CD8-positive, alpha-beta T cell (primary cell): ENCODE measurements at regions of chr17 and their contacts with region 1.

Region 1: DNA sequence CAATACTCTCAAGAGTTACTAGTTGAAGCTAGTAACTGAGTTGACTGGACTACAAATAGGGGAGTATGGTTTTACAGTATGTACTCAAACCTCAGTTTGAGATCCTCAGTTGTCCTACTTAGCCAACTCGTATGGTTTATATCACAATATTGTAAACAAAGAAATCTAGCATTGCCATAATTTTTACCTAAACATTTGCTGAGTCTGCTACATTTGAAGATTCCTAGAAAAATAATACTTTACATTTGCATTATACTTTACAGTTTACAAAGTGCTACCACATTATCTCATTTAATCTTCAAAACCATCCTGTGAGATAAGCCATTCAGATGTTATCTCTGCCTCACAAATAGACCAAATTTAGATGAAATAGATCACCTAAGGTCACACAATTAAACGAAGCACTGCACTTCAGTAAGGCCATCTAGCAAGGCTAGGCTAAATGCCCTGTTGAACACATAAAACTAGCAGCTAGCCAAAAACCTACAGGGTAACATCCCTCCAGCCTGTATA is 16.3 kb downstream of the CBX1 start:
- DNase-seq: no peak
- ATAC-seq: no peak
- H3K4me3 ChIP-seq: no peak overlapping the region
- H3K4me3 Mint-ChIP-seq: no peak overlapping the region
- H3K27ac ChIP-seq: no peak overlapping the region
- H3K27ac Mint-ChIP-seq: no peak overlapping the region
- H3K4me1 ChIP-seq: no peaks in the 10 kb centered on the region
- H3K4me1 Mint-ChIP-seq: peaks cover 10% of the 10 kb centered on the region
- H3K27me3 ChIP-seq: no peaks in the 10 kb centered on the region
- H3K27me3 Mint-ChIP-seq: no peaks in the 10 kb centered on the region
- CTCF ChIP-seq: no peak

Region 2: DNA sequence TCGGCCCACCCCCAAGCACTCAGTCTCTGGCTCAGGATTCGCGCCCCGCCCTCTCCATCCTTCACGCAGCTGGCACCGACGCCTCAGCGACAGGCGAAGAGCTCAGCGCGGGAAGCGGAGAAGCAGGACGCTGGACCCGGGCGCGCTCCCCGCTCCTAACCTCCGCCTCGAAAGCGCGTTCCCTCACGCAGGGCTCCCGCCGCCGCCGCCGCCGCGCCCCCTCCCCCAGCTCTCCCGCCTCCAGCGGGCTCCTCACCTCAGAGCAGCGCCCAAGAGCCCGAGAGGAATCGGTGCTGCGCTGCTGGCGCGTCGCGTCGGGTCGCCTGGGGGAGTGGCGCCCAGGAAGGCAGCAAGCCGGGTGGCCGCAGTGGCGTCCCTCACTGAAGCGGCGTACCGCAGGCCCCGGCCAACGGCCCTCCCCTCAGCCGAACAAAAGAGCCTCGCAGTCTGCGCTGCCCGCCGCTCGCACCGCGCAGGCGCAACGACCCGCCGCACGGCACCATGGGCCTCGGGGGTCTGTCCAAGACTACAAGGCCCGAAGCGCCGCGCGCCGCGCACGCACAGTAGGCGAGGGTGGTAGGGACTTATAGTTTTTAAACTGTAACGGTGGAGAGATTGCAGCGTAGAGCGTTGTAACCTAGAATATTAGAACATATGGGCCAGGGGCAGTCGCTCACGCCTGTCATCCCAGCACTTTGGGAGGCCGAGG is 16.2 kb after region 1 on chr17 and contains the start of gene CBX1:
- CTCF ChIA-PET with region 1: interaction called, 16 read pairs
- POLR2A ChIA-PET with region 1: interaction called, 4 read pairs
- intact Hi-C with region 1: no loop called
- DNase-seq: peak; percentile 84 to 96 (median 94)
- ATAC-seq: peak; percentile 96
- H3K4me3 ChIP-seq: peak within 1 kb of the TSS; percentile 65 to 91
- H3K4me3 Mint-ChIP-seq: peak within 1 kb of the TSS; percentile 89
- H3K27ac ChIP-seq: peak within 1 kb of the TSS; percentile 24 to 50
- H3K27ac Mint-ChIP-seq: peak within 1 kb of the TSS; percentile 79
- H3K4me1 ChIP-seq: peaks cover 21% of the 10 kb centered on the region
- H3K4me1 Mint-ChIP-seq: peaks cover 37% of the 10 kb centered on the region
- H3K27me3 ChIP-seq: no peaks in the 10 kb centered on the region
- H3K27me3 Mint-ChIP-seq: no peaks in the 10 kb centered on the region
- CTCF ChIP-seq: no peak
- total RNA-seq, gene CBX1: 5.4 to 6.6 TPM

Region 3: DNA sequence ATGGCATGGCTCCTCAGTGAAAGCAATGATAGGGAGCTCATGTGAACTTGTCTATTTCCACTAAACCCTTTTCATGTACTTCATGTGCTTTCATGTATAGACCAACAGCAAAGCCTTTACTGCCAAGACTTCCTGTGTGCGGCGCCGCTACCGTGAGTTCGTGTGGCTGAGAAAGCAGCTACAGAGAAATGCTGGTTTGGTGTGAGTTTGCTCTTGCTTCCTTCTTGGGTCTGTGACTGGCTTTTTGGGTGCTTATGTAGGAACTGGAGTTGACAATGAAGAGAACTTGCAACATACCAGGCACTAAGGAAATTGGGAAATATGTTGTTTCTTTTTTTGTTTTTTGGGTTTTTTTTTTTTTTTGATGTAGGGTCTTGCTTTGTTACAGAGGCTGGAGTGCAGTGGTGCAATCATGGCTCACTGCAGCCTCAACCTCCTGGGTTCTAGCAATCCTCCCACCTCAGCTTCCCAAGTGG is 28.3 kb after region 1 on chr17:
- CTCF ChIA-PET with region 1: interaction called, 14 read pairs
- POLR2A ChIA-PET with region 1: interaction called, 3 read pairs
- intact Hi-C with region 1: no loop called
- DNase-seq: peak; percentile 6 to 77 (median 54)
- ATAC-seq: peak; percentile 83
- H3K4me3 ChIP-seq: no peak overlapping the region
- H3K4me3 Mint-ChIP-seq: peak overlapping the region; percentile 63
- H3K27ac ChIP-seq: peak overlapping the region in 1 of 2 experiments; percentile 65
- H3K27ac Mint-ChIP-seq: peak overlapping the region; percentile 89
- H3K4me1 ChIP-seq: peaks cover 33% of the 10 kb centered on the region
- H3K4me1 Mint-ChIP-seq: peaks cover 44% of the 10 kb centered on the region
- H3K27me3 ChIP-seq: no peaks in the 10 kb centered on the region
- H3K27me3 Mint-ChIP-seq: no peaks in the 10 kb centered on the region
- CTCF ChIP-seq: no peak

Region 4: DNA sequence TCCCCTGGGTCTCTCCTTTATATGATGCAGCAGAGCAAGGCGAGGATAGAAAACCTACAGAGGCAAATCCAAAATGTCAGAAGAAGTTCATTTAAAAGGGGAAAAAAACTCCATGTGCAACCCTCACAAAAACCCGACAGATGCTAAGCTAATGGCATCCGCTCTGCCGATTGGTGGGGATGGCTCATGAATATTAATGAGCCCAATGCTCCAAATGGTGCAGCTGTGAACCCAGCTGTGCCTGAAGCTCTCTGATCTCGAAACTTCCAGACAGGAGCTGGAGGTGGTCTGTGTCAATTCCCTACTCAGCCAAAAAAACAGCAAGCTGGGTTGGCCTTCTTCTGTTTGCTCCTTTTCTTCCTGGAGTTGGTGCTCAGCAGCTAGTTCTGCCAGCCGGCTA is 38.1 kb after region 1 on chr17:
- CTCF ChIA-PET with region 1: interaction called, 39 read pairs
- POLR2A ChIA-PET with region 1: interaction called, 4 read pairs
- intact Hi-C with region 1: no loop called
- DNase-seq: no peak
- ATAC-seq: no peak
- H3K4me3 ChIP-seq: no peak overlapping the region
- H3K4me3 Mint-ChIP-seq: no peak overlapping the region
- H3K27ac ChIP-seq: no peak overlapping the region
- H3K27ac Mint-ChIP-seq: no peak overlapping the region
- H3K4me1 ChIP-seq: no peaks in the 10 kb centered on the region
- H3K4me1 Mint-ChIP-seq: no peaks in the 10 kb centered on the region
- H3K27me3 ChIP-seq: no peaks in the 10 kb centered on the region
- H3K27me3 Mint-ChIP-seq: no peaks in the 10 kb centered on the region
- CTCF ChIP-seq: no peak

Region 5: DNA sequence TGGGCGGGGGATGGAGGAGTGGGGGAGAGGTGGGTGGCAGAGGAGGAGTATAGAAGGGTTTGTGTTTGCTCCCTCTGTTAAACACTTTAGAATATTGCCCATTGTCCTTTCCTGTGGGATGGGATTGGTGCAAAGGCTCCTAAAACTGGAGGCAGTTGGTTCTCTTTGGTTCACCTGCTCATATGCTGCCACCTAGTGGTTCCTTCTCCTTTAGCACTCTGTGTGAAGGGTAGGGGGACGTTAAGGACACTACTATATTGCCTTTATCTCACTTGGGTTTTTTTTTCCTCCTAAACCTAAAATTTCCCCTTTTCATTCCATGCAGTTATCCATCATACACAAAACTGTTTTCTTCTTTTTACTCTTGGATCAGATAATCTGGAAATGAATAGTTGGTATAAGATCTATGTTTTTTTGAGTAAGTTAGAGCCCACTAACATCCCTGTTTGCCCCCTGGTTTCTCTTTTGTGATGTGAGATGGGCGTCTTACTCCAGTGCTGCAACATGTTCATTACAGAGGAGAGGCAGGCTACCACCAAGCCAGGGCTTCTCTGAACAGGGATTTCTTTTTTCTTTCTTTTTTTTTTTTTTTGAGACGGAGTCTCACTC is 46.3 kb after region 1 on chr17:
- CTCF ChIA-PET with region 1: interaction called, 94 read pairs
- POLR2A ChIA-PET with region 1: interaction called, 4 read pairs
- intact Hi-C with region 1: loop called (anchors 1 kb)
- DNase-seq: peak in 8 of 9 experiments; percentile 29 to 78 (median 55)
- ATAC-seq: peak; percentile 83
- H3K4me3 ChIP-seq: no peak overlapping the region
- H3K4me3 Mint-ChIP-seq: no peak overlapping the region
- H3K27ac ChIP-seq: no peak overlapping the region
- H3K27ac Mint-ChIP-seq: no peak overlapping the region
- H3K4me1 ChIP-seq: no peaks in the 10 kb centered on the region
- H3K4me1 Mint-ChIP-seq: no peaks in the 10 kb centered on the region
- H3K27me3 ChIP-seq: no peaks in the 10 kb centered on the region
- H3K27me3 Mint-ChIP-seq: no peaks in the 10 kb centered on the region
- CTCF ChIP-seq: peak; percentile 83

Region 6: DNA sequence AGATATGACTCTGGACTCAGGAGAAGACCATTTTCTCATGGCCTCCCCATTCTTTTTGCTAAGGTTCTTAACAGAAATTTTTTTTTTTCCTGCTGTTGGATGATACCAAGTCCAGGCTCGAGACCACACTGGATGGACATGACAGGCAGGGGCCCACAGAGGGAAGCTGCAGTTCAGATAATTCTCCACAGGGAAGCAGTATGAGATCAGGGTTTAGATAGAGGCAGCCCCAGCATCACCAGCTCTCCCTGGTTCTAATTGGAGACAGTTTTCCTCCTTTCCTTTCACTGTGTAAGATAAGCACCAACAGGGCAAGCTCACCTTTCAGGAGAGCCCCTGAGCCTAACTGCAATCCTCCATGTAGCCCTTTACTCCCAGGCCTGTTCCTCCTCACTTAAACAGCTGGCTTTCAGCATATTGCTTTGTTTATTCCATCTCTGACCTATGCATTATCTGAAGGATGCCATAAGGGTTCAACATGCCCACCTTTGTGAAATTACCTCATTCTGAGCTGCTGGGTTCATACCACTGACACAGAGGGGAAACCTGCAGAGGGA is 130.7 kb after region 1 on chr17:
- CTCF ChIA-PET with region 1: no interaction called
- POLR2A ChIA-PET with region 1: no interaction called
- intact Hi-C with region 1: no loop called
- DNase-seq: no peak
- ATAC-seq: no peak
- H3K4me3 ChIP-seq: no peak overlapping the region
- H3K4me3 Mint-ChIP-seq: no peak overlapping the region
- H3K27ac ChIP-seq: no peak overlapping the region
- H3K27ac Mint-ChIP-seq: peak overlapping the region; percentile 76
- H3K4me1 ChIP-seq: no peaks in the 10 kb centered on the region
- H3K4me1 Mint-ChIP-seq: peaks cover 23% of the 10 kb centered on the region
- H3K27me3 ChIP-seq: no peaks in the 10 kb centered on the region
- H3K27me3 Mint-ChIP-seq: no peaks in the 10 kb centered on the region
- CTCF ChIP-seq: no peak